Calu3 (cell line): ENCODE measurements at regions of chr16 and their contacts with region 1.

Region 1: GRCh38 chr16:25111403-25112166 is at the start of gene LCMT1:
- DNase-seq: peak; percentile 92
- H3K4me3 Mint-ChIP-seq: peak within 1 kb of the TSS; percentile 93
- H3K27ac Mint-ChIP-seq: peak within 1 kb of the TSS; percentile 96
- H3K4me1 Mint-ChIP-seq: peaks cover 60% of the 10 kb centered on the region
- H3K27me3 Mint-ChIP-seq: no peaks in the 10 kb centered on the region
- CTCF ChIP-seq: no peak
- total RNA-seq, gene LCMT1: 43.6 and 46.8 TPM in 2 replicates

Region 2: GRCh38 chr16:24844101-24845030 is 267.2 kb before region 1 on chr16:
- CTCF ChIA-PET with region 1: no interaction called
- intact Hi-C with region 1: loop called (anchors 5 kb)
- DNase-seq: peak; percentile 76
- H3K4me3 Mint-ChIP-seq: peak overlapping the region; percentile 23
- H3K27ac Mint-ChIP-seq: peak overlapping the region; percentile 94
- H3K4me1 Mint-ChIP-seq: peaks cover 56% of the 10 kb centered on the region
- H3K27me3 Mint-ChIP-seq: no peaks in the 10 kb centered on the region
- CTCF ChIP-seq: no peak

Region 3: GRCh38 chr16:24993722-24994686 is 117.6 kb before region 1 on chr16:
- CTCF ChIA-PET with region 1: no interaction called
- intact Hi-C with region 1: loop called (anchors 10 kb)
- DNase-seq: peak; percentile 50
- H3K4me3 Mint-ChIP-seq: no peak overlapping the region
- H3K27ac Mint-ChIP-seq: peak overlapping the region; percentile 22
- H3K4me1 Mint-ChIP-seq: peaks cover 63% of the 10 kb centered on the region
- H3K27me3 Mint-ChIP-seq: no peaks in the 10 kb centered on the region
- CTCF ChIP-seq: no peak

Region 4: DNA sequence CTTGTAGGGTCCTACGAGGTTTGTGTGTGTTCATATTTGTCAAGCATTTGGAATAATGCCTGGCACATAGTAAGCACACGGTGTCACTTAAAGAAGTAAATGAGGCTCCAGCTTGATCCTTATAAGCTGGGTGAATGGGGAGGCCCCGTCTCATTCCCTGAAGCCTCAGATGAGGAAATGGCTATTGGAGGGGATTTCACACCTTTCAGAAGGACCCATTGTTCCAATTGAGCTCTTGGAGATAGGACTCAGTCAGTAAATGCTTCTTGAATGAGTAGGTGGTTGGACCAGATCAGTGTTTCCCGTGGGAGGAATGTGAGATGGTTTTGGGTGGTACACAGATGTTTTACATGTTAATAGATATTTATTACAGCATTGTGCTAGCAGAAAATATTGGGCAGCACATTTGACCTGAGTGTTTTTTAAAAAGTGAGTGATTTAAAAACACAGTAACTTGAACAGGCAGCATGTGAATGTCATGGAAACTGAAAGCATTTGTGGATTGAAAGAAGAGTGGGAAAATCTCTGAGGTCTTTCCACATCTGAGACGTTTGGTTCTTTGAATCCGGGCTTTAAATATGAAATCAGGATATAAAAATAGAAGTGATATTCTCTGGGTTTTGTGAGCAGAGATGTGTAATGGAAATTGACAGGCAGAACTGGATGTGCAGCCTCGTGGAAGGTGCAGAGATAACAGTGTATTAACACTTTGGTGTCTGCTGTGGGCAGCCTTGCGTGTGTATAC is 60.0 kb before region 1 on chr16:
- CTCF ChIA-PET with region 1: interaction called, 5 read pairs
- intact Hi-C with region 1: loop called (anchors 2 kb)
- DNase-seq: peak; percentile 70
- H3K4me3 Mint-ChIP-seq: peak overlapping the region; percentile 50
- H3K27ac Mint-ChIP-seq: peak overlapping the region; percentile 99
- H3K4me1 Mint-ChIP-seq: peaks cover 46% of the 10 kb centered on the region
- H3K27me3 Mint-ChIP-seq: no peaks in the 10 kb centered on the region
- CTCF ChIP-seq: no peak